Dendritic cell treated with granulocyte-macrophage colony-stimulating factor and Interleukin-4, amounts not matched to agents 40 ng/mL and 50 ng/mL, for 4 days (primary cell): ENCODE measurements at regions of chr17 and their contacts with region 1.

Region 1: DNA sequence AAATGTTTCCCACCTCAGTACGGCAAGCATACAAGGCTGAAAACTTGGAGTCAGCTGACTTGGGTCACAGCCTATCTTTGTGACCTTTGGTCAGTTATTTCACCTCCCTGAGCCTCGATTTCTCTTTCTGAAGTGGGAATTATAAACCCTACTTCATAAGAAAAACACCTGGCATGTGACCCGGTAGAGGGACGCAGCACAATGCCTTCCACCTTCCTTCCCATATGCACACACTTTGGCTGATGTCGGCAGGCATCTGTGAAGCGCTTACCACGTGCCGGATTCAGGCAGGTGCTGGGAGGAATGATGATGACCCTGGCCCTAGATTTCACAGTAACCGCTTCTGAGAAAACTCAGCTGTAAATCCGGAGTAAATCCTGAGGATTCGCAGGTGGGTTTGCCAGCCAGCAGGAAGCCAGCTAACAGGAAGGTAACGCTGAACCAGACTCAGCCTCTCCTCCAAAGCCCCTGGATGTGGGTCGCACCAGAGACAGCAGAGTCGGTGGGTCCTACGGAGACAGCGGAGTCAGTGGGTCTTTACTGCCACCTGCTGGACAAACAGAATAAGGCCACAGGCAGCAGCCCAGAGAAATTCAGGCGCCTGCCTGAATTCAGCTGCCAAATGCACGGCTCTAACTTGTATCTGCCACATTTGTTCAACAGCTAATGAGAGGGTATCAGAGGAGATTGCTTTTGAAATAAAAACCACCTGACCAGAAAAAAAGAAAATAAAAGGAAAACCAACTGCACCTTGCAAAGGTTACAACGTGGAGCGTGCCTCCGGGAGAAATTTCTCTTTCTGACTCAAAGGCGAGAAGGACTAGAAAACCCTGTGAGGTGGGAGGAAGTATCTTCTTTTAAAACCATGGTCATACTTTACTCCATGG is 16.6 kb downstream of the COPRS start:
- H3K4me3 Mint-ChIP-seq: no peak overlapping the region
- H3K27ac Mint-ChIP-seq: no peak overlapping the region
- H3K4me1 Mint-ChIP-seq: peaks cover 9% of the 10 kb centered on the region
- H3K27me3 Mint-ChIP-seq: peaks cover 2% of the 10 kb centered on the region

Region 2: GRCh38 chr17:31437720-31438420 is 404.6 kb before region 1 on chr17:
- intact Hi-C with region 1: loop called (anchors 1 kb)
- H3K4me3 Mint-ChIP-seq: no peak overlapping the region
- H3K27ac Mint-ChIP-seq: no peak overlapping the region
- H3K4me1 Mint-ChIP-seq: peaks cover 14% of the 10 kb centered on the region
- H3K27me3 Mint-ChIP-seq: peaks cover 30% of the 10 kb centered on the region

Region 3: GRCh38 chr17:31558748-31559644 is 283.4 kb before region 1 on chr17:
- intact Hi-C with region 1: loop called (anchors 1 kb)
- H3K4me3 Mint-ChIP-seq: peak overlapping the region; percentile 68
- H3K27ac Mint-ChIP-seq: peak overlapping the region; percentile 65
- H3K4me1 Mint-ChIP-seq: peaks cover 38% of the 10 kb centered on the region
- H3K27me3 Mint-ChIP-seq: peaks cover 7% of the 10 kb centered on the region